Gastrocnemius medialis (tissue), 4 donors: ENCODE measurements at regions of chr7 and their contacts with region 1.

Region 1: GRCh38 chr7:113404245-113404644 is 285.9 kb upstream of the SMIM30 start:
- DNase-seq: no peak
- ATAC-seq: peak in 1 of 2 donors; percentile 53
- H3K4me3 ChIP-seq: no peak overlapping the region
- H3K27ac ChIP-seq: no peak overlapping the region
- H3K4me1 ChIP-seq: no peaks in the 10 kb centered on the region
- H3K27me3 ChIP-seq: no peaks in the 10 kb centered on the region
- CTCF ChIP-seq: peak in 3 of 5 experiments; percentile 40 to 46 (median 45)
- POLR2A ChIP-seq: no peak

Region 2: GRCh38 chr7:113086431-113086888 is 317.8 kb before region 1 on chr7 and contains the start of gene GPR85:
- in situ Hi-C with region 1: no loop called
- intact Hi-C with region 1: no loop called
- DNase-seq: peak in 1 of 2 donors; percentile 9
- ATAC-seq: no peak
- H3K4me3 ChIP-seq: peak within 1 kb of the TSS; percentile 40 to 54 (median 52)
- H3K27ac ChIP-seq: peak within 1 kb of the TSS in 1 of 4 donors; percentile 18
- H3K4me1 ChIP-seq: peaks cover 0 to 16% of the 10 kb centered on the region in 2 donors
- H3K27me3 ChIP-seq: peaks cover 0 to 9% (median 0%) of the 10 kb centered on the region in 3 donors
- CTCF ChIP-seq: no peak
- POLR2A ChIP-seq: no peak
- total RNA-seq, gene GPR85: 0.13 to 3.1 (median 0.82) TPM in 3 of 4 donors, not detected in the other

Region 3: GRCh38 chr7:113698556-113699220 is 294.4 kb after region 1 on chr7:
- in situ Hi-C with region 1: loop called in 3 of 4 experiments (anchors 5 to 10 kb)
- intact Hi-C with region 1: loop called (anchors 1 kb)
- DNase-seq: no peak
- ATAC-seq: no peak
- H3K4me3 ChIP-seq: no peak overlapping the region
- H3K27ac ChIP-seq: no peak overlapping the region
- H3K4me1 ChIP-seq: peaks cover 0 to 22% of the 10 kb centered on the region in 2 donors
- H3K27me3 ChIP-seq: no peaks in the 10 kb centered on the region
- CTCF ChIP-seq: peak; percentile 49 to 76 (median 61)
- POLR2A ChIP-seq: no peak